ENCODE measurements at regions of chr1 and their contacts with region 1.

Region 1: DNA sequence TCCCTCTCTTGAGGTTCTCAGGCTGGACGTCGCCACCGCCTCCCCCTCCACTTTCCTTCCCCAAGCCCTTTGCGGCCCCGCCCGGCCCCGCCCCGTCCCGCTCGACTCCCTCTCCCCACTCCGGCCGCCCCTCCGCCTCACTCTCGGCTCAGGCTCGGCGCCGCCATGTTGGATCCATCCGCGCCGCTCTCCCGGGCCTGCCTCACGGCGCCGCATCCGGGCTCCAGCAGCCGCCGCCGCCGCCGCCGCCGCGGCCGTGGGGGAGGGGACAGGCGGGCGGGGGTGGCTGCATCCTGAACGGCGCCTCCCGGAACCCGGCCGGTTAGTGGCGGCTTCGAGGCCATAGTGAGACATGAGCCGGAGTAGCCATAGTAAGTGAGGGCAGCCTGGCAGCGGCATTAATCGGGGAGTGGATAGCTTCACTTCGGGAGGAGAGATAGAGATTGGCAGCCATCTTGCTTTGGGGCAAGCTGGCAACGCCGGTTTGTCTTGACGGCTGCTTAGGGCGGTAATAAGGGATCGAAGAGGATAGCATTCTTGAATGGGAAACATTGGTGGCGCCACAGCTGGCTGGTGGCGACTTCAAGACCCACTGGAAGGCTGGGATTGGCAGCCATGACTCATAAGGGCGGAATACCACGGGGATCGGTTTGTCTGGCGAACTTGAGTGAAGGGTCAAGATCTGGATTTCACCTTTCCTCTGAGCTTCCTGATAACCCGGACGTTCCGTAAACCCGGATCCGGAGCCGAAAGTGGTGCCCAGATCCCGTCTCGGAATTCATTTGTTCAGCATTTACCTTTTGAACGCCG is at the start of gene DEDD:
- DNase-seq: peak; percentile 85 to 99 (median 90)

Region 2: GRCh38 chr1:161045750-161046571 is 86.7 kb before region 1 on chr1 and contains the start of gene USF1:
- intact Hi-C with region 1: loop called (anchors 5 kb)
- DNase-seq: peak; percentile 88 to 99 (median 91)

Region 3: GRCh38 chr1:161098210-161099068 is 34.2 kb before region 1 on chr1 and contains the start of gene KLHDC9:
- intact Hi-C with region 1: loop called (anchors 5 kb)
- DNase-seq: peak; percentile 53 to 98 (median 80)

Region 4: GRCh38 chr1:161117759-161118581 is 14.6 kb before region 1 on chr1 and contains the starts of genes NIT1 and PFDN2:
- intact Hi-C with region 1: loop called (anchors 2 kb)
- DNase-seq: peak; percentile 79 to 98 (median 88)

Region 5: GRCh38 chr1:161153679-161154426 is 21.2 kb after region 1 on chr1 and contains the start of gene UFC1:
- intact Hi-C with region 1: loop called (anchors 1 kb)
- DNase-seq: peak; percentile 68 to 97 (median 78)

Region 6: DNA sequence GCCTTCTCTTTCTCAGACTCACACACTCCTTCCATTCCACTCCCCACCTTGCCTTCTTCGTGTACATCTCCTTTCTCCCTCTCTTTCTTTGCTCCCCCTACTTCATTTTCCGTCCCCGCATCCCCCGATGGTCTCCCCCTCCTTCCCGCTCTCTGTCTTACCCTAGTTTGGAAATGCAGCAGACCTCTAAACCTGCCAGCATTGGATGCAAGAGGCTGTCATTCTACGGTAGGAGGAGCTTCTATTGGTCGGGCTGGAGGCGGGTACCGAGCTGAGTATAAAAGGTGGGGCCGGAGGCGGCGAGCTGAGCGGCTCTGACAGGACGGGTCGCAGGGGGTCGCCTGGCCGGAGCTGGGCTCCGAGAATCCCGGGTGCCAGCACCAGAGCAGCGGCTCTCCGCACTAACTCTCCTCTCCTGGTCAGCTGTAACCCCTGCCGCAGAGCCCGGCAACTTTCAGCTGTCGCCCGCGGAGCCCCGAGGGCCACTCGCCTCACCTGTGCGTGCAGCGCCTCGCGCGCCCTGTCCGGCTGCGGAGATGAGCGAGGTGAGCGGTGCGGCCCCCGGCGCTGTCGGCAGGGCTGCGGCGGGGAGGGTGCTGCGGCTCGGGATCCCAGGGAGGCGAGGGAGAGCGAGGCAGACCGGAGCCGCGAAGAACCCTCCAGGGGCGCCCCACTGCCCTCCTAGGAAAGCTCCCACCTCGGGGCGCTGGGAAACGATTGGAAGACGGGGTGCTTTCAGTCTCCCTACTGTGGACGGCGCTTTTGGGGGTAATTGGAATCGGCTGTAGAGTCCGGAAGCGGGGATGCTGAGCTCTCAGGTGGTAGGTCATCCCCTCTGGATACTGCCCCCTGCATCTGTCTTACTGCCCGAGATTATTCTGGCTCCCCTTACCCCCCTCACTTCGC is 126.1 kb after region 1 on chr1 and contains the start of gene PCP4L1:
- intact Hi-C with region 1: no loop called
- DNase-seq: peak; percentile 36 to 95 (median 64)

Region 7: DNA sequence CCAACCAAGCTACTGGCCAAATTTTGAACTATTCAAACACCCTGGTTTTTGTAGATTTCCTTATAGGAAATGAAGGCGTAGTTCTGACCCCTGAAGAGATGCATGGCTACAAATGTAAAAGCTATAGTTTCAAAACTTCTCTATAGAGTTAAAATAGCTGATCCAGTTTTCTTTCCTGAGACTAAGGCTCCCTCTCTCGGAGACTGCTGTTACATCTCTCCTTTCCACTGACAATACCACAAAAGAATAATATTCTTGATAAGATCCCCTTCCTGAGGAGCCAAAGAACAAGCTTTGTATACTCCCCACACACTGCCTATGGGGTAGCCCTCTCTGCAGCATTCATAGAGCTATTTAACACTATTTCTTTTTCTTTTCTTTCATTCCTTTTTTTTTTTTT is 241.8 kb after region 1 on chr1:
- intact Hi-C with region 1: no loop called
- DNase-seq: no peak

Region 8: GRCh38 chr1:161956097-161956496 is 823.5 kb after region 1 on chr1:
- intact Hi-C with region 1: no loop called
- DNase-seq: no peak

Region 9: GRCh38 chr1:162319493-162320175 is 1187.0 kb after region 1 on chr1:
- intact Hi-C with region 1: no loop called
- DNase-seq: peak in 8 of 10 donors; percentile 29 to 92 (median 64)